ENCODE measurements at regions of chr15 and their contacts with region 1.

Region 1: DNA sequence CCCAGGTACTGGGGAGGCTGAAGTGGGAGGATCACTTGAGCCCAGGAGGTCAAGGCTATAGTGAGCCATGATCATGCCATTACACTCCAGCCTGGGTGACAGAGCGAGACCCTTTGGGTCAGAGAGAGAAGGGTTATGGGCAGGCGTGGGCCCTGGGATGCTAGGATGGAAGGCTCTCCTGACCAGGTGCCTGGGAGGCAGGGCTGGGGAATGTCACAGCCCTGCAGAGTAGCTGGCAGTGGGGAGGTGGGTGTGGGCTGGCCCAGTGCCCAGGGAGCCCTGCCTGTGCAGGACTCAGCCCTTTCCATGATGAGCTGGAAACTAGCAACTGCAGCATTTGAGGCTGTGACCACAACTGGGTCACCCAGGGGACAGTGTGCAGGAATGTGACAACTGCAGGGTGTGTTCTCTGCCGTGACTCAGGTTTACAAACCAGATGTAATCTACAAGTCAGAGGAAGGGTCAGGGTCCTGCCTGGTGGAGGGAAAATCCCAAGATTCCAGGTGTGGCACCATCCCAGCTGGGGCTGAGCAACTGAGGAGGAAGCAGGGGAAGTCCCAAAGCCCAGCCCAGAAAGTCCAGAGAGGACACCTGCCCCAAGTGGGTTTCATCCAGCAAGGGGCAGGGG is 45.4 kb downstream of the SLC28A1 start:
- DNase-seq: no peak
- H3K4me3 Mint-ChIP-seq: no peak overlapping the region
- H3K27ac Mint-ChIP-seq: no peak overlapping the region
- H3K4me1 Mint-ChIP-seq: peaks cover 6% of the 10 kb centered on the region
- H3K27me3 Mint-ChIP-seq: no peaks in the 10 kb centered on the region

Region 2: GRCh38 chr15:84588053-84588874 is 341.6 kb before region 1 on chr15:
- CTCF ChIA-PET with region 1: interaction called, 28 read pairs
- intact Hi-C with region 1: loop called (anchors 1 kb)
- DNase-seq: peak; percentile 89
- H3K4me3 Mint-ChIP-seq: peak overlapping the region; percentile 34
- H3K27ac Mint-ChIP-seq: no peak overlapping the region
- H3K4me1 Mint-ChIP-seq: peaks cover 2% of the 10 kb centered on the region
- H3K27me3 Mint-ChIP-seq: peaks cover 4% of the 10 kb centered on the region

Region 3: GRCh38 chr15:84826369-84826823 is 103.5 kb before region 1 on chr15:
- CTCF ChIA-PET with region 1: interaction called, 14 read pairs
- intact Hi-C with region 1: loop called (anchors 2 kb)
- DNase-seq: peak; percentile 37
- H3K4me3 Mint-ChIP-seq: no peak overlapping the region
- H3K27ac Mint-ChIP-seq: no peak overlapping the region
- H3K4me1 Mint-ChIP-seq: no peaks in the 10 kb centered on the region
- H3K27me3 Mint-ChIP-seq: no peaks in the 10 kb centered on the region

Region 4: DNA sequence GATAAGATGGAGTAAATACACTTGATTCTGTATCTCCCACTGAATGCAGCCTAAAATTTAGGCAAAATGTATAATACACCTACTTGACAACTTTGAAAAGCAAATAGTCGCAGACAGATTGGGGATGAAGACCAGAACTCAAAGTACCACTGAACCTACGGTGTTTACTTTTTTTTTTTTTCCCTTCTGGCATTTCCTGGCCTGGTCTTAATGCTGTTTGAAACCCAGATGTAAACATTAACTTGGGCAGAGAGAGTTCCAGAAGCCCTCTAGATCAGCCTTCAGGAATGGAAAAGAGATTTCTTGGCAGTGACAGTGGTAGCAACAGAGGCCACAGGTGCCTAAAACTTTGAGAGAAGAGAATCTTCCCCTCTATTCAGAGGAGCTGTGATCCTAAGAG is 84.9 kb before region 1 on chr15:
- CTCF ChIA-PET with region 1: interaction called, 7 read pairs
- intact Hi-C with region 1: loop called (anchors 1 kb)
- DNase-seq: no peak
- H3K4me3 Mint-ChIP-seq: no peak overlapping the region
- H3K27ac Mint-ChIP-seq: no peak overlapping the region
- H3K4me1 Mint-ChIP-seq: no peaks in the 10 kb centered on the region
- H3K27me3 Mint-ChIP-seq: no peaks in the 10 kb centered on the region

Region 5: GRCh38 chr15:84855136-84855535 is 74.7 kb before region 1 on chr15:
- CTCF ChIA-PET with region 1: no interaction called
- intact Hi-C with region 1: no loop called
- DNase-seq: no peak
- H3K4me3 Mint-ChIP-seq: no peak overlapping the region
- H3K27ac Mint-ChIP-seq: no peak overlapping the region
- H3K4me1 Mint-ChIP-seq: no peaks in the 10 kb centered on the region
- H3K27me3 Mint-ChIP-seq: no peaks in the 10 kb centered on the region

Region 6: GRCh38 chr15:84883433-84883832 is 46.4 kb before region 1 on chr15:
- CTCF ChIA-PET with region 1: interaction called, 10 read pairs
- intact Hi-C with region 1: loop called (anchors 1 kb)
- DNase-seq: no peak
- H3K4me3 Mint-ChIP-seq: no peak overlapping the region
- H3K27ac Mint-ChIP-seq: no peak overlapping the region
- H3K4me1 Mint-ChIP-seq: no peaks in the 10 kb centered on the region
- H3K27me3 Mint-ChIP-seq: no peaks in the 10 kb centered on the region

Region 7: GRCh38 chr15:84894442-84895361 is 35.2 kb before region 1 on chr15:
- CTCF ChIA-PET with region 1: no interaction called
- intact Hi-C with region 1: no loop called
- DNase-seq: no peak
- H3K4me3 Mint-ChIP-seq: no peak overlapping the region
- H3K27ac Mint-ChIP-seq: no peak overlapping the region
- H3K4me1 Mint-ChIP-seq: no peaks in the 10 kb centered on the region
- H3K27me3 Mint-ChIP-seq: no peaks in the 10 kb centered on the region

Region 8: DNA sequence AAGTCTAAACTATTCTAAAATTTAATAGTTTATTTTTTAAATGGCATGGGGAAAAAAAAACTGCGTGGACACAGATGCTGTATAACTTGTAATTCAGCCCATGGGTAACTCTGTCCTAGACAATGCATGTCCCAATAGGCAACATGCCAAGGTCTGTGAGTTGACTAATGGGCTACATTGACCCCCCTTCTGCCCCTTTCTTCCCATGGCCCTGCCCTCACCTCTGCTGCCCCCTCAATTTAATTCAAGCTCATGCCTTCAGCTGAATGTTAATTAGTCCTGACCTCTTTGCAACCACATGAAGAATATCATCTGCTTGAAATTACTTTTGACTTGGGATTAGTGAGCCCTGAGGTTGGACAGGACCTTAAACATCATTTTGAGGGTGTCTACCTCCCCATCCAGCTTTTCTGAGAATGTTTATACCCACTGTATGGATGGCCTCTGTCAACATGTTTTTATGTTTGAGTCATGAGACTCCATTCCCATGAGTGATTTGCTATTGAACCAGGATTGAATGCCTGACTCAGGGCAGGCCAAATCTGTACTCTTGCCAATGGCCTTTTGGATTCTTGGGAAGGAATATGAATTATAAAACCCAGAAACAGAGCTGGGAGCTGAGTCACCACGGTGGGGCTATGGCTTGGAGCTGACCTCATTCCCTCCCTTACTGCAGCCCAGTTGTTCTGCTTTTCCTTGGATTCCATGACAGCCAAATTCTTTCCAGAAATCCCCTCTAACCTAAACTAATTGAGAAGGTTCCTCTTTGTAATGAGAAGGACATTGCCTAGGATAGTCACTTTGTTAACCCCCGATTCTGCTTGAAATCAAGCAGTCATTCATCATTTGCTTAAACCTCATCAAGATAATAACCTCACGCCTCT is 18.3 kb after region 1 on chr15:
- CTCF ChIA-PET with region 1: no interaction called
- intact Hi-C with region 1: no loop called
- DNase-seq: no peak
- H3K4me3 Mint-ChIP-seq: no peak overlapping the region
- H3K27ac Mint-ChIP-seq: no peak overlapping the region
- H3K4me1 Mint-ChIP-seq: no peaks in the 10 kb centered on the region
- H3K27me3 Mint-ChIP-seq: no peaks in the 10 kb centered on the region

Measured in activated naive CD4-positive, alpha-beta T cell treated with anti-CD3 and anti-CD28 coated beads for 36 hours (primary cell).